Activated CD4-positive, alpha-beta T cell treated with anti-CD3 and anti-CD28 coated beads for 36 hours (primary cell): ENCODE measurements at regions of chr2 and their contacts with region 1.

Region 1: GRCh38 chr2:217223222-217223930 is 363.5 kb upstream of the TNP1 start:
- DNase-seq: peak; percentile 82
- ATAC-seq: peak; percentile 92
- H3K4me3 Mint-ChIP-seq: peak overlapping the region; percentile 44
- H3K27ac Mint-ChIP-seq: peak overlapping the region; percentile 86
- H3K4me1 Mint-ChIP-seq: peaks cover 31% of the 10 kb centered on the region
- H3K27me3 Mint-ChIP-seq: peaks cover 10% of the 10 kb centered on the region

Region 2: GRCh38 chr2:216013080-216013909 is 1210.1 kb before region 1 on chr2 and contains the start of gene MREG:
- CTCF ChIA-PET with region 1: no interaction called
- POLR2A ChIA-PET with region 1: no interaction called
- intact Hi-C with region 1: loop called in 1 of 2 experiments (anchors 10 kb)
- DNase-seq: peak; percentile 94
- ATAC-seq: peak; percentile 70
- H3K4me3 Mint-ChIP-seq: peak within 1 kb of the TSS; percentile 88
- H3K27ac Mint-ChIP-seq: peak within 1 kb of the TSS; percentile 81
- H3K4me1 Mint-ChIP-seq: peaks cover 60% of the 10 kb centered on the region
- H3K27me3 Mint-ChIP-seq: no peaks in the 10 kb centered on the region
- total RNA-seq, gene MREG: 9.1 to 9.8 TPM

Region 3: DNA sequence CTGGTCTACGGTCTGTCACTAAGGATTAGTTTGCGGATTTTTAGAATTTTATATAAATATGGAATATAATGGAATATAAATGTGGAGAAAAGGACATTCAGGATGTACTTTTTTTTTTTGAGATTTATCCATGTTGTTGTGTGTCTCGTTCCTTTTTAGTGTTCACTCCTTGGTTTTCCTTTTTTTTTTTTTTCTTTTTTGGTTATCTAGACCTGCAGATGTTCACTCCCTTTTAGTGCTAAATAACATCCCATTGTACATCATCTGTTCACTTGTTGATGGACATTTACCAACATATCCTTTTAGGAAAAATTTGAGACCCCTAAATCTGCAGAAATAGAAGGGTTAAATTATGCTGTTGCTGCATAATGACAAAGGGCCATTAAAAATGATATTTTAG is 750.2 kb before region 1 on chr2:
- CTCF ChIA-PET with region 1: no interaction called
- POLR2A ChIA-PET with region 1: no interaction called
- intact Hi-C with region 1: loop called in 1 of 2 experiments (anchors 2 kb)
- DNase-seq: no peak
- ATAC-seq: no peak
- H3K4me3 Mint-ChIP-seq: no peak overlapping the region
- H3K27ac Mint-ChIP-seq: no peak overlapping the region
- H3K4me1 Mint-ChIP-seq: peaks cover 19% of the 10 kb centered on the region
- H3K27me3 Mint-ChIP-seq: no peaks in the 10 kb centered on the region

Region 4: DNA sequence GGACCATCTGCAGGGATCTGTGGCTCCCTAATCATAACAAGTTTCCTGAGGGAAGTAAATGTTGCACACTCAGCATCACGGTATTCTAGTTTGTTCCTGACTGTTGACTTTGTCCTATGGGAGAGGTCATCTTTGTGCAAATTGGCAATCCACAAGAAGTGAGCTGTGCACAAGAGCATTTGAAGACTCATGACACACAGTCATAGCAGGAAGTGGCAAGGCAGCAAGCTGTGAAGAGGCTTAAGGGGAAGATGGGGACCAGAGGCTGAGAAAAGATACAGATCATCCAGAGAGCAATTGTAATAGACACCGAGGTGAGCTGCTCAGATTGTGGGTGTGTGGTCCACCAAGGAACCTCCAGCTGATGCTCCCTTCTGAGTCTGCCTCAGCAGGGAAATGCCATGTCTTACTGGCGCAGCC is 366.2 kb before region 1 on chr2:
- CTCF ChIA-PET with region 1: no interaction called
- POLR2A ChIA-PET with region 1: interaction called, 4 read pairs
- intact Hi-C with region 1: loop called in 1 of 2 experiments (anchors 5 kb)
- DNase-seq: peak; percentile 46
- ATAC-seq: peak; percentile 89
- H3K4me3 Mint-ChIP-seq: no peak overlapping the region
- H3K27ac Mint-ChIP-seq: no peak overlapping the region
- H3K4me1 Mint-ChIP-seq: peaks cover 22% of the 10 kb centered on the region
- H3K27me3 Mint-ChIP-seq: peaks cover 4% of the 10 kb centered on the region

Region 5: DNA sequence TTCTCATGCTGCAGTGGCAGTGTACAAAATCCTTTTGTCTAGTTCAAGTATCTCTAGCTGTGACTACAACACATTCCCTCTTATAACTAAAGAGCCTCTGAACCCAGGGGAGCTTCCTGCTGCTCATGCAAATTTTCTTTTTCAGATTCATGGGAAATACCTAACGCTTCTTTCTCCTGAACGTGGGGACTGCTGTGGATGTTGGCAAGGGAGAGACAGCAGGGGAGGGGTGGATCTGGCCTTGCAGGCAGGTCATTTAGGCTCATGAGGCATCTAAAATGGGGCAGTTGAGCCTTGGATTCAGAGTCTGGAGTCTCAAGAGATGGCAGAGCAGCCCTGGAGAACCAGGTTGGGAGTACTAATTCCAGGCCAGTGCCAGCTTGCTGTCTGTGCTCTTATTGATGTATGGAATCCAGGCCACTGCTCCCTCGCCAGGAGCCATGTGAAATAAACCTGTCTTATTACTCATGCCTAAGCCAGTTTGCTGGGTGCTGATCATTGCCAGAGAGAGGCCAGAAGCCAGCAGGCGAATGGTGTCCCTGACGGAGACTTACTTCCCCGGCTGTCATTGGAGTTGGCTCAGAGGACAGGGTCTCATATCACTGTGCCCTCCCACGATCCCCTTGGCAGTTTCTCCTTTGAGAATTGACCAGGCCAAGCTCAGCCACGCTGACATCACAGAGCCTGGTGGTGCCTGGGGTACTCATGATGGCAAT is 334.3 kb before region 1 on chr2:
- CTCF ChIA-PET with region 1: no interaction called
- POLR2A ChIA-PET with region 1: no interaction called
- intact Hi-C with region 1: no loop called
- DNase-seq: no peak
- ATAC-seq: no peak
- H3K4me3 Mint-ChIP-seq: no peak overlapping the region
- H3K27ac Mint-ChIP-seq: no peak overlapping the region
- H3K4me1 Mint-ChIP-seq: no peaks in the 10 kb centered on the region
- H3K27me3 Mint-ChIP-seq: peaks cover 3% of the 10 kb centered on the region

Region 6: DNA sequence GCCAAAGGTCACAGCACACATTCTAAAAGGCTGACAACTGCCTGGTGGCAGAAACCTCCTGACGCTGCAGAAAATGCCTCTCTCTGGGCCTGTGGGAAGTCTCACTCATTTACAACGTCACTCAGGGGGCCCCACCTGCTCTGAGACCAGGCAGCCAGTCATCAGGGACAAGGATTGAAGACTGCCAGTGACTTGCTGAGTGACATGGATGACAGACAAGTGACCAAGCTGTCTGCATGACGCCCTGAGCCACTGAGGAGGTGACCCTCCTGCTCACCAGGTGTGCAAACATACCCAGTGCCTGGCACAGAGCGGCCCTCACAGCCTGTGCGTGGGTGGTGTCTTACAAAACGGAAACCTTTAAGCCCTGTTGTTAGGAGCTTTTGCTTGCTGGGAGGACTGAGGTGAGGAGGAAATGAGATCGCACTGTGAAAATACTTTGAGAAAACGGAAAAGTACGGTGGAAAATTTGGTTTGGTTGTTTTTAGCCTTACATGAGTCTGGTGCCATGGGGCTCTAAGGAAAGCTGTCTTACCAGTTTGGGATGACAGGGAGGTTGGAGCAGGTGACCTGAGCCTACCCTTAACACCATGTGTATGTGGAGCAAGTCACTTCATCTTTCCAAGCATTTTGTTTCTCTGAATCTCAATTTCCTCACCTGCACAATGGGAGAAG is 387.2 kb after region 1 on chr2:
- CTCF ChIA-PET with region 1: no interaction called
- POLR2A ChIA-PET with region 1: no interaction called
- intact Hi-C with region 1: loop called in 1 of 2 experiments (anchors 5 kb)
- DNase-seq: peak; percentile 84
- ATAC-seq: peak; percentile 87
- H3K4me3 Mint-ChIP-seq: peak overlapping the region; percentile 21
- H3K27ac Mint-ChIP-seq: peak overlapping the region; percentile 88
- H3K4me1 Mint-ChIP-seq: peaks cover 57% of the 10 kb centered on the region
- H3K27me3 Mint-ChIP-seq: no peaks in the 10 kb centered on the region